ENCODE measurements at regions of chr6 and their contacts with region 1.

Region 1: GRCh38 chr6:20036141-20036677 is 176.1 kb downstream of the MBOAT1 start:
- DNase-seq: no peak

Region 2: DNA sequence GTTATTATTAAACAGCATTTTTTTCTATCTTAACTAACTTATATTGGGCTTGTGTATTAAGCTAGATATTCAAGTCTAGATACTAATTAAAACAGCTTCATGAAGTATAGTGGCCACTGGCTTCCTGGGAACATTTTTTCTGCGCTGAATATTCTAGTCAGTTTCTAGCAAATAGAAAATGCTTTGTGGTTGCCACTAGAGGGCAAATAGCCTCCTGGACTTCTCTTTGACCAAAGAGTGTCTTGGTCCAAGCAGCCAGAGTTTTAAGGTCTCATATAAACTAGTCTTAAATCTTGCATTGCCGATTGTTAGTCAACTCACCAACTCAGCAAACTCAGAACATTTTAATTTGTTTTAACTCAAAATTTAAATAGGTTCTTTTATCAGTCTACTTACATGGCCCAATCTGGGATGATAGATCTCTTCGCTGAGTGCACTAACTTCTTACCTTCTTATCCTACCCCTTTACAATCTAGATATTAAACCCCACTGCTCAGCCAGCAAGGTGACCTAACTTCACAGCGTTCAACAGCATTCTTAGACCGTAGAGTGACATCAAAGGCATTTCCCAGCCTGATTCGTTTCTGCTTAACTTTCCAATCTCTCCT is 223.6 kb before region 1 on chr6:
- intact Hi-C with region 1: no loop called
- DNase-seq: no peak

Region 3: GRCh38 chr6:20071998-20072397 is 35.8 kb after region 1 on chr6:
- intact Hi-C with region 1: loop called in 1 of 2 experiments (anchors 1 kb)
- DNase-seq: no peak

Measured in posterior vena cava (tissue), 2 donors.